Mammary epithelial cell (primary cell): ENCODE measurements at regions of chr9 and their contacts with region 1.

Region 1: GRCh38 chr9:136093995-136094881 is 851 bp downstream of the NACC2 start:
- DNase-seq: peak; percentile 62
- H3K4me3 ChIP-seq: peak overlapping the region; percentile 65 to 77 (median 70)
- H3K27ac ChIP-seq: peak overlapping the region; percentile 33
- H3K4me1 ChIP-seq: peaks cover 35% of the 10 kb centered on the region
- H3K27me3 ChIP-seq: no peaks in the 10 kb centered on the region
- CTCF ChIP-seq: no peak

Region 2: GRCh38 chr9:136051517-136052432 is 42.5 kb before region 1 on chr9:
- CTCF ChIA-PET with region 1: no interaction called
- dilution Hi-C with region 1: no loop called
- in situ Hi-C with region 1: no loop called
- intact Hi-C with region 1: loop called (anchors 1 kb)
- DNase-seq: peak; percentile 96
- H3K4me3 ChIP-seq: peak overlapping the region; percentile 29 to 63 (median 48)
- H3K27ac ChIP-seq: peak overlapping the region; percentile 47
- H3K4me1 ChIP-seq: peaks cover 44% of the 10 kb centered on the region
- H3K27me3 ChIP-seq: no peaks in the 10 kb centered on the region
- CTCF ChIP-seq: no peak

Region 3: GRCh38 chr9:136109351-136110081 is 15.3 kb after region 1 on chr9:
- CTCF ChIA-PET with region 1: no interaction called
- dilution Hi-C with region 1: no loop called
- in situ Hi-C with region 1: no loop called
- intact Hi-C with region 1: loop called (anchors 1 kb)
- DNase-seq: peak; percentile 90
- H3K4me3 ChIP-seq: peak overlapping the region in 2 of 3 experiments; percentile 6 to 12
- H3K27ac ChIP-seq: no peak overlapping the region
- H3K4me1 ChIP-seq: peaks cover 46% of the 10 kb centered on the region
- H3K27me3 ChIP-seq: no peaks in the 10 kb centered on the region
- CTCF ChIP-seq: peak in 1 of 2 donors; percentile 20

Region 4: DNA sequence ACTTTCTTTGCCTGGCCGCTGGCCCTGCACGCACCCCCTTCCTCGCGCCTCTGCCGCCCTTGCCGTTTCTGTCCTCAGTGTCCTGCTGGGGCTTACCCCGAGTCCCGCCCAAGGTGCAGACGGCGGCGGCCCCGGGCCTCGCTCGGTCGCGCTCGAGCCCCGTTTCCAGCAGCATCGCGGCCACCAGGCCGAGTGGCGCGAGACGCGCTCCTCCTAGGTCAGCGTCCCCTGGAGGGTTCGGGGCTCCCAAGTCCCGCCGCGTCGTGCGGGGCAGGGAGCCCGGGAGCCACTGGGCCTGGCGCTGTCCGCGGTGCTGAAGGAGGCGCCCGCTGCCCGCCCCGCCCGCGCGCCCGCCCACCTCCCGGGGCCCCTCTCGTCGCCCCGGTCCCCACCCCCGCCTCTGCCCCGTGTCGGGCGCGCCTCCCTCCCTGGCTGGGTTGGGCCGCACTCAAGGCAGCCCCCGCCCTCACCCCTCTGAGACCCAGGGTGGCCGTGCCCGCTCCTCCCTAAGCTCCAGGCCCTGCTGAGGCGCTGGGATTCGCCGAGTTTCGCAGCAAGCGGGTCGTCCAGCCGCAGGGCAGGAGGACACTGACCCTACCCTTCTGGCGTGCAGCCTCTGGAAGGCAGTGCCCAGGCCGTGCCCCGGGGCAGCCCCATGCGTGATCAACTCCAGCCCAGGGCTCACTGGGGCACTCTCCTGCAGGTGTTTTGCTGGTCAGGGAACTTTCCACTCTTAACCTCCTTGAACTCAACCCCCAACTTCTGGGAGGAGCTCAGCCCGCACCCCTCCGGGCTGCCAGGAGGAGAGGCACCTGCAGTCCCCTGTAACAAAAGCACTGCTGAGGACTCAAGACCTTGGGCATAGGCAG is 110.8 kb after region 1 on chr9 and contains the start of gene LHX3:
- CTCF ChIA-PET with region 1: no interaction called
- dilution Hi-C with region 1: no loop called
- in situ Hi-C with region 1: no loop called
- intact Hi-C with region 1: no loop called
- DNase-seq: no peak
- H3K4me3 ChIP-seq: no peak within 1 kb of the TSS
- H3K27ac ChIP-seq: no peak within 1 kb of the TSS
- H3K4me1 ChIP-seq: no peaks in the 10 kb centered on the region
- H3K27me3 ChIP-seq: peaks cover 43% of the 10 kb centered on the region
- CTCF ChIP-seq: no peak
- total RNA-seq, gene LHX3: not detected

Region 5: DNA sequence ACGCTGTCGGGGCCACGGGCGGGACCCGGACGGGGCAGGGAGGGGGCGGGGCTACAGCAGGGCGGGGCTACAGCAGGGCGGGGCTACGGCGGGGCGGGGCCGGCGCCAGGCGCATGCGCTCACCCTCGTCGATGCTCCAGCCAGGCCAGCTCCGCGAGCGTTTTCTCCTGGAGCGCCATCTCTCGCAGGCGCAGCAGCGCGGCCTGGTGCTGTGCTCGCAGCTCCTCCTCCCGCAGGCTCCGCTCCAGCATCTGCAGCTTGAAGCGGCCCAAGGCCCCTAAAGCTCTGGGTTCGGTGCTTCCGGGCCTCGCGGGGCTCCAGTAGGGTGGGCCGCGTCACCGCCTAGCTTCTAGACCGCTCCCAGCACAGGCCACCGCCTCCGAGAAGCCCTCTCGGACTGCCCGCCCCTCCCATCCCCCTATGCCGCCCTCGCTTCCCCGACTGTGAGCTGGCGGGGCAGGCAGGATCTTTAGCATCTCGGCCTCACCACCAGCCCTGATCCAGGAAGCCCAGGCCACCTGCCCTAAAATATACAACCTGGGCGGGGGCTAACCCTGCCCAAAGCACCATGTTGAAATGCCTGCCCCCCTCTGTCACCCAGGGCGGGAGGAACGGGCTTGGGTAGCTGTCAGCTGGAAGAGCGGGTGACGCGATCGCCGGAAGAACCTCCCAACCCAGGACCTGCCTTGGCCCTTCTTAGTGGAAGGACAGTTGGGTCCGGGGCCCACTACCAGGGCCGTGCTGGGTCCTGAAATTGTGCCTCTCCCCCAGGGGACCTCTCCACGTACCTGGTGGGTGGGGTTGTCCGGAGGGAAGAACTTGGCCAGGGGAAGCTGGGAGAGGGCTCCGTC is 173.2 kb after region 1 on chr9:
- CTCF ChIA-PET with region 1: no interaction called
- dilution Hi-C with region 1: no loop called
- in situ Hi-C with region 1: no loop called
- intact Hi-C with region 1: no loop called
- DNase-seq: peak; percentile 66
- H3K4me3 ChIP-seq: peak overlapping the region; percentile 41 to 59 (median 55)
- H3K27ac ChIP-seq: no peak overlapping the region
- H3K4me1 ChIP-seq: peaks cover 5% of the 10 kb centered on the region
- H3K27me3 ChIP-seq: peaks cover 3% of the 10 kb centered on the region
- CTCF ChIP-seq: peak in 1 of 2 donors; percentile 40

Region 6: DNA sequence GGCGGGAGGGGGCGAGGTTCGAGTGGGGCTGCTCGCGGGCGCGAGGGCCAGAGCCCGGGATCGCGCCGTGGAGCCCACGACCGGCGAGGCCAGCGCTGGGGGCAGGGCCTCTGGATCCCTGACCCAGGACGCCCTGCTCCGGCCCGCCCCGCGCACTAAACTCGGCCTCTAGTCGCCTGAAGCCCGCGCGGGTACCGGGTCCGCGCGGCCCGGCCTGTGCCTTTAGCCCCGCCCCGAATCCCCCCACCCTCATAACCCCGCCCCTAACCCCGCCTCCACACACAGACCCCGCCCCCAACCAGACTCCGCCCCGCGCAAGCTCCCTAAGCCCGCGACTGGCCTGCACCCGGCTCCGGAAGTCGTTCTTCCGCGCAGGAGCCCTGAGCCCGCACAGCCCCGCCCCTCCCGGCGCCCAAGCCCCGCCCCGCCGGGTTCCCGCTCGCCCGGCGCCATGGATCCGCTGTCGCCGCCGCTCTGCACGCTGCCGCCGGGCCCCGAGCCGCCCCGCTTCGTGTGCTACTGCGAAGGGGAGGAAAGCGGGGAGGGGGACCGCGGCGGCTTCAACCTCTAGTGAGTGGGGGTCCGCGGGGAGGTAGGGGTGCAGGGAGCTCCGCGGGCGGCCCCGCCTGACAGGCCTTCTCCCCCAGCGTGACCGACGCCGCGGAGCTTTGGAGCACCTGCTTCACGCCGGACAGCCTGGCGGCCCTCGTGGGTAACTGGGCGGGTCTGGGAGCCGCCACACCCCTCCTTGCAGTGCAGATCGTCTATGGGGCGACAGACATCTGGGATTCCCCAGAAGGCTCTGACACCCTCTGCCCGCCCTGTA is 898.0 kb after region 1 on chr9 and contains the start of gene PAXX:
- CTCF ChIA-PET with region 1: interaction called, 10 read pairs
- dilution Hi-C with region 1: no loop called
- in situ Hi-C with region 1: no loop called
- intact Hi-C with region 1: no loop called
- DNase-seq: peak; percentile 82
- H3K4me3 ChIP-seq: peak within 1 kb of the TSS; percentile 72 to 81 (median 77)
- H3K27ac ChIP-seq: peak within 1 kb of the TSS; percentile 66
- H3K4me1 ChIP-seq: peaks cover 26% of the 10 kb centered on the region
- H3K27me3 ChIP-seq: no peaks in the 10 kb centered on the region
- CTCF ChIP-seq: no peak
- total RNA-seq, gene PAXX: 6.8 to 35.2 TPM